ENCODE measurements at regions of chr11 and their contacts with region 1.

Region 1: DNA sequence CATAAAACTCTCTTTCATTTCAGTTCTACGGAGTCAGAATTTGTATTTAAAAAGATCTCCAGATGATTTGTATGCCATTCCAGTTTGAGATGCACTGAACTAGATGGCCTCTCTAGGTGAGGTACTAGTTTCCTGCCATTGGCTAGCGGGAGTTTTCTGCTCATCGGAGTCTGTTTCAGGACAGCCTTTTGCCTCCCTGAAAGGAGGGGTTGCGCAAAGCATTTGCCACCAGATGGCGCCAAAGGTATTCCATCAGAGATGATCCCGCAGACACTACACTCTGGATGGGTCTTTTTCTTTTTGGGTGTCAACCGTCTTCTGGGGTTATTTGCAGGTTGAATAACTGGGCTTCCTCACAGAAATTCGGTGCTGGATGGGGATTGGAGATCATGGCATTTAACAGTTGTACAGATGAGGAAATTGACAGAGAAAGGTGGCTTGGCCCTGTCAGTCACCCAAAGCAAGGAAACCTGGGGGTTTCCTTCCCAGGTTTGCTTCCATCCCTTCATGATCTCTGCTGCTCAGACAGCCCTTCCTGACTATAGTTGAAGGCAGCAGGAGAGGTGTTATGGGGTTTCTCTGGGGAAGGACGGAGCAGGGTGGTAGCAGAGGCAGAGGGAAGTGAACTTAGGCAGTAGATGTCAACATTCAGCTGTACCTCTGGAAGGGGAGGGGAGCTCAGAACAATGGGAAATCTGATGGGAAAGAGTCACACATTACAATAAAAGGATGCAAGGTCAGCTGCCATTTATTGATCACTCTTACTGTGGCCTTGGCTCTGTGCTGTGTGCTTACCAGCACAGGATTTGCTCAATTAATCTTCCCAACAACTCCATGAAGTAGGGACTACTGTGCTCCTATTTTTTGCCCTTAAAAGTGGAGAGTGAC is 81.6 kb downstream of the CCDC81 start:
- DNase-seq: peak; percentile 76
- ATAC-seq: peak; percentile 75 to 80
- H3K4me3 ChIP-seq: no peak overlapping the region
- H3K27ac ChIP-seq: no peak overlapping the region
- H3K4me1 ChIP-seq: peaks cover 34% of the 10 kb centered on the region
- H3K27me3 ChIP-seq: no peaks in the 10 kb centered on the region
- CTCF ChIP-seq: peak; percentile 95

Region 2: GRCh38 chr11:86818466-86819192 is 362.3 kb after region 1 on chr11:
- intact Hi-C with region 1: loop called (anchors 5 kb)
- DNase-seq: no peak
- ATAC-seq: peak; percentile 39 to 77
- H3K4me3 ChIP-seq: no peak overlapping the region
- H3K27ac ChIP-seq: no peak overlapping the region
- H3K4me1 ChIP-seq: peaks cover 15% of the 10 kb centered on the region
- H3K27me3 ChIP-seq: no peaks in the 10 kb centered on the region
- CTCF ChIP-seq: peak; percentile 74

Measured in lower lobe of right lung (tissue), 2 donors.